CD4-positive, alpha-beta memory T cell (primary cell): ENCODE measurements at regions of chr9 and their contacts with region 1.

Region 1: GRCh38 chr9:127802576-127803443 is at the start of gene FPGS:
- DNase-seq: peak; percentile 84 to 88 (median 87)
- H3K4me3 ChIP-seq: peak within 1 kb of the TSS; percentile 80 to 94
- H3K4me3 Mint-ChIP-seq: peak within 1 kb of the TSS; percentile 89 to 94 (median 92)
- H3K27ac ChIP-seq: peak within 1 kb of the TSS; percentile 72
- H3K27ac Mint-ChIP-seq: peak within 1 kb of the TSS; percentile 88 to 96 (median 93)
- H3K4me1 ChIP-seq: peaks cover 25% of the 10 kb centered on the region
- H3K4me1 Mint-ChIP-seq: peaks cover 4 to 38% (median 23%) of the 10 kb centered on the region in 4 donors
- H3K27me3 ChIP-seq: no peaks in the 10 kb centered on the region
- H3K27me3 Mint-ChIP-seq: no peaks in the 10 kb centered on the region
- total RNA-seq, gene FPGS: 100 to 101 TPM

Region 2: DNA sequence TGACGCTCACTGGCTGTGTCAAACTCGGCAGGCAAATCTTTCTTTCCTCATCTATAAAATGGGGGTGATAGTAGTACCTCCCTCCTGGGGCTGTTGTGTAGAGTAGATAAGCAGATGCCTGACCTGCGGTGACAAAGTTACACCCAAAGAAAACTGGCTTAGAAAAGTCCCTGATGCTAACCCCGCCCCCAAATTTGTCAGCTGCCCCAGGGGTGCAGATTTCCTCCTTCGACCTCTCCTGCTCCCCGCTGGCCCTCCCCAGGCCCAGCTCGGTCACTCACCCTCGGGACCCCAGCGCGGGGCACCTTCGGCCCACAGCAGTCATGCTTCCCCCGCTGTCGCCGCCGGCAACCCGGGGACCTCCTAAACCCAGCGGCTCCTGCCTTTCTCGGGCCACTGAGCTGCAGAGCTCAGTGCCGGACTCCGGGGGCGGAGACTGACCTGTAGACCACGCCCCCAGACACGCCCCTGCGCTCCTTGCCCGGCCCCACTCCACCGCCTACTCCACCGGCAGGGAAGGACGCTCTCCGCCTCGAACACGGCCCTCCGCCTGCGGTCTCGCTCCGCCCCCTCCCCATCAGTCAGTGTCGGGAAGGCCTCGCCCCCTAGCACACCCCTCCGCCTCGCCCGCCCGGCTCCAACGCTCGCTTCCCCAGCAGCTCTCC is 31.8 kb before region 1 on chr9:
- CTCF ChIA-PET with region 1: interaction called, 3 read pairs
- POLR2A ChIA-PET with region 1: interaction called, 14 read pairs
- intact Hi-C with region 1: loop called (anchors 1 kb)
- DNase-seq: peak; percentile 92 to 96 (median 95)
- H3K4me3 ChIP-seq: peak overlapping the region; percentile 50 to 78
- H3K4me3 Mint-ChIP-seq: peak overlapping the region; percentile 78 to 92 (median 88)
- H3K27ac ChIP-seq: peak overlapping the region; percentile 97
- H3K27ac Mint-ChIP-seq: peak overlapping the region; percentile 92 to 99 (median 98)
- H3K4me1 ChIP-seq: peaks cover 91% of the 10 kb centered on the region
- H3K4me1 Mint-ChIP-seq: peaks cover 41 to 78% (median 61%) of the 10 kb centered on the region in 4 donors
- H3K27me3 ChIP-seq: no peaks in the 10 kb centered on the region
- H3K27me3 Mint-ChIP-seq: no peaks in the 10 kb centered on the region

Region 3: DNA sequence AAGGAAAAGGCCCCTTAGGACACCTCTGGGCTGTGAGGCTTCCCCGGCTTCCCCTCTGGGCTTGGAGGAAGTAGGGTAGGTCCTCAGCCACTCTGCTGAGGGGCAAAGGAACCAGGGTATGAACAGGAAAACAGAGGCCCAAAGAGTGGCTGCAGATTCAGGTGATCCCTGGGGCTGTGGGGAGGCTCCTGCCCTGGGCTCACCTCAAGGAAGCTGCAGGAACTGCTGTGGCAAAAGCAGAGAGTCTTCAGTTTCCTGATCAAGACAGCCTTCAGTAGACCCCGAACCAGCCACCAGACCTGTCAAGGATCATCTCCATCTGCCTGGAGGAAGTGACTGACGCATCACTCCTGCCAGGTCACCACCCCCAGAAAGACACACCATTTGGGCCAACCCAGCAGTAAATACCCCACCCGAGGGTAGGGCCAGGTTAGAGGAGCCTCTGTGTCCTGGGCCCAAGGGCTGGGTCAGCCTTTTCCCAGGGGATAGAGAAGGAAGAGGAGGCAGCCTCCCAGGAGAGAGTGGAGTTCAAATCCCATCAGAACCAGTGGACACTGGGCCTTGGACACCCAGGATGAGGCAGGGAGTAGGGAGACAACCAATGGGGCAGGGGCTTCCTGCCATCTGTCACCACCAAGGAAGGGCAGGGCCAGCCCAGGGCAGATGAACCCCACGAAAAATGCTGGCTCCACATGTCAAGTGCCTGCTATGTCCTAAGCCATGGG is 102.4 kb after region 1 on chr9:
- CTCF ChIA-PET with region 1: no interaction called
- POLR2A ChIA-PET with region 1: interaction called, 7 read pairs
- intact Hi-C with region 1: loop called (anchors 2 kb)
- DNase-seq: peak; percentile 59 to 89 (median 61)
- H3K4me3 ChIP-seq: peak overlapping the region; percentile 82 to 85
- H3K4me3 Mint-ChIP-seq: peak overlapping the region; percentile 86 to 99 (median 95)
- H3K27ac ChIP-seq: peak overlapping the region; percentile 100
- H3K27ac Mint-ChIP-seq: peak overlapping the region; percentile 98 to 100 (median 100)
- H3K4me1 ChIP-seq: peaks cover 67% of the 10 kb centered on the region
- H3K4me1 Mint-ChIP-seq: peaks cover 16 to 60% (median 31%) of the 10 kb centered on the region in 4 donors
- H3K27me3 ChIP-seq: no peaks in the 10 kb centered on the region
- H3K27me3 Mint-ChIP-seq: no peaks in the 10 kb centered on the region